HCT116 (cell line): ENCODE measurements at regions of chr2 and their contacts with region 1.

Region 1: GRCh38 chr2:44479122-44479887 is 117.6 kb downstream of the CAMKMT start:
- DNase-seq: peak; percentile 72
- ATAC-seq: peak; percentile 98
- H3K4me3 ChIP-seq: no peak overlapping the region
- H3K27ac ChIP-seq: no peak overlapping the region
- H3K4me1 ChIP-seq: no peaks in the 10 kb centered on the region
- H3K27me3 ChIP-seq: no peaks in the 10 kb centered on the region
- CTCF ChIP-seq: peak; percentile 99 to 100 (median 100)
- POLR2A ChIP-seq: no peak
- RAD21 ChIP-seq: peak; percentile 90

Region 2: GRCh38 chr2:44044281-44044720 is 435.0 kb before region 1 on chr2:
- CTCF ChIA-PET with region 1: interaction called, 16 read pairs
- POLR2A ChIA-PET with region 1: no interaction called
- RAD21 ChIA-PET with region 1: interaction called in 1 of 2 experiments, 3 read pairs
- intact Hi-C with region 1: loop called (anchors 1 kb)
- DNase-seq: peak; percentile 77
- ATAC-seq: peak; percentile 100
- H3K4me3 ChIP-seq: no peak overlapping the region
- H3K27ac ChIP-seq: peak overlapping the region; percentile 7; the same call in 1 of the 2 replicates
- H3K4me1 ChIP-seq: peaks cover 0 to 7% of the 10 kb centered on the region in 2 experiments; a peak in 3 of 4 replicates
- H3K27me3 ChIP-seq: no peaks in the 10 kb centered on the region
- CTCF ChIP-seq: peak; percentile 83 to 98 (median 98)
- POLR2A ChIP-seq: no peak
- RAD21 ChIP-seq: peak; percentile 95

Region 3: DNA sequence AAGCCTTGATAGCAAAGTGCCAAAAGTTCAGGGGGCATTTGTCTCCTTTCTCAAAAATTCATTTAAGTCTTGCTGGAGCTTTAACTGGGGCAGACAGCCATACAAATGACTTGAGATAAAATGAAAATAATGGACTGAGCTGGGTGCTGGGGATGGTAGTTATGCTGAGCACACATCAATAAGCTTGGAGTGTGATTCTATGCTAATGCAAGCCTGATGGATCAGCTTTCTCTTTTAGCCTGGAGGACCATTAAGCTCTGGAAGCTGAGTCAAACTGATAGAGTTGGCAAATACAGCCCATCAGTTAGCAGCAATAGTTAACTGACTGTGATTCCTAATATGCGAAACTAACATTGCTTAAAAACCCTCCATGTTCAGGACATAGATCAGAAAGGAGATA is 19.6 kb before region 1 on chr2:
- CTCF ChIA-PET with region 1: interaction called, 11 read pairs
- POLR2A ChIA-PET with region 1: no interaction called
- RAD21 ChIA-PET with region 1: no interaction called
- intact Hi-C with region 1: no loop called
- DNase-seq: no peak
- ATAC-seq: no peak
- H3K4me3 ChIP-seq: no peak overlapping the region
- H3K27ac ChIP-seq: no peak overlapping the region
- H3K4me1 ChIP-seq: no peaks in the 10 kb centered on the region
- H3K27me3 ChIP-seq: no peaks in the 10 kb centered on the region
- CTCF ChIP-seq: no peak
- POLR2A ChIP-seq: no peak
- RAD21 ChIP-seq: no peak

Region 4: GRCh38 chr2:44632931-44633689 is 153.8 kb after region 1 on chr2:
- CTCF ChIA-PET with region 1: no interaction called
- POLR2A ChIA-PET with region 1: no interaction called
- RAD21 ChIA-PET with region 1: no interaction called
- intact Hi-C with region 1: no loop called
- DNase-seq: no peak
- ATAC-seq: no peak
- H3K4me3 ChIP-seq: no peak overlapping the region
- H3K27ac ChIP-seq: no peak overlapping the region
- H3K4me1 ChIP-seq: no peaks in the 10 kb centered on the region
- H3K27me3 ChIP-seq: no peaks in the 10 kb centered on the region
- CTCF ChIP-seq: no peak
- POLR2A ChIP-seq: no peak
- RAD21 ChIP-seq: no peak

Region 5: DNA sequence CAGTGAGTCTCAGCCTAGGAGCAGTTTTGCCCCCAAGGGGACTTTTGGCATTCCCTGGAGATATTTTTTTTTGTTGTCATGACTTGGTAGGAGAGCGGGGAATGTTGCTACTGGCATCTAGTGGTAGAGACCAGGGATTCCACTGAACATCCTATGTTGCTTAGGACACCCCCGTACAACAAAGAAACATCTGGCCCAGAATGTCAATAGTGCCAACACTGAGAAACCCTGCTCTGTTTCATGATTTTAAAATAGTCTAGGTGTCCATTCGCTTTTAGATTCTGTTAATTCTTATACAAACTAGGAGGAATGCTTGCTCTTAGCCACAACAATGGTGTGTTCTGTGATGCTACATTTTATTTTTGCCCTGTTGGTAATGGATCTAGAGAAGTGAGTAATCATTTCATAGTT is 236.4 kb after region 1 on chr2:
- CTCF ChIA-PET with region 1: interaction called, 22 read pairs
- POLR2A ChIA-PET with region 1: interaction called, 3 read pairs
- RAD21 ChIA-PET with region 1: interaction called in 1 of 2 experiments, 4 read pairs
- intact Hi-C with region 1: loop called (anchors 1 kb)
- DNase-seq: peak; percentile 19
- ATAC-seq: peak; percentile 85
- H3K4me3 ChIP-seq: no peak overlapping the region
- H3K27ac ChIP-seq: no peak overlapping the region
- H3K4me1 ChIP-seq: no peaks in the 10 kb centered on the region
- H3K27me3 ChIP-seq: no peaks in the 10 kb centered on the region
- CTCF ChIP-seq: peak; percentile 53 to 66 (median 64)
- POLR2A ChIP-seq: no peak
- RAD21 ChIP-seq: peak; percentile 58

Region 6: DNA sequence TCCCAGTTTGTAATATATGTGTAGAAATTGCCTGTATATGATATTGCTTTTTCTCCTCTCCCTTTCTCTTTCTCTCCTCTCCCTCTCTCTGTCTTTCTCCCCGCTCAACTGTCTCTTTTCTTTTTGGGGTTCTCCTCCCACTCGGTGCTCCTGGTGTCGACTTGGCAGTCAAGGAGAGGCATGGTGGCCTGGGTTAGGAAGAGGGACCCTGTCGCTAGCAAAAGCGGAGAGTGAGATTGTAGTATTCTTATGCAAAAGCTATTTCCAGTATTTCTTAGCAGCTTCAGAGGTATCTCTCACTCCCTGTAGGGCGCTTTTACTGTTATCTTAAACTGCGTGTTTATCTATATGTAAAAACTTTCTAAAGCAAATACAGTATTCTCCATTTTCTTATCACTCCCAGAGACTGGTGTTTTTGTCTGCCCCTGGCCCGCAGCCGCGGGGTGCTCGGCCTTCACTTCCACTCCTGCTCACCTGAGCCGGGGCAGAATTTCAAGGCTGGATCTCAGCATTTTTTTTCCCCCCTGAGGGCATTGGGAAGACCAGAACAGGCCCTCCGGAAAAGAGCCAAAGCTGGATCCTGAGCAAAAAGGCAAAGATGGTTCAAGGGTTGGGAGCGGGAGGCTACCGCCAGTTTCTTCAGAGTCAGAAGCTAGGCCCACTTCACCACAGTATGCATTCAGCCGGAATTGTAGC is 466.5 kb after region 1 on chr2:
- CTCF ChIA-PET with region 1: no interaction called
- POLR2A ChIA-PET with region 1: no interaction called
- RAD21 ChIA-PET with region 1: no interaction called
- intact Hi-C with region 1: no loop called
- DNase-seq: no peak
- ATAC-seq: no peak
- H3K4me3 ChIP-seq: no peak overlapping the region
- H3K27ac ChIP-seq: no peak overlapping the region
- H3K4me1 ChIP-seq: peaks cover 5 to 12% of the 10 kb centered on the region in 2 experiments; a peak in 3 of 4 replicates
- H3K27me3 ChIP-seq: no peaks in the 10 kb centered on the region
- CTCF ChIP-seq: no peak
- POLR2A ChIP-seq: no peak
- RAD21 ChIP-seq: no peak